ENCODE measurements at regions of chr14 and their contacts with region 1.

Region 1: DNA sequence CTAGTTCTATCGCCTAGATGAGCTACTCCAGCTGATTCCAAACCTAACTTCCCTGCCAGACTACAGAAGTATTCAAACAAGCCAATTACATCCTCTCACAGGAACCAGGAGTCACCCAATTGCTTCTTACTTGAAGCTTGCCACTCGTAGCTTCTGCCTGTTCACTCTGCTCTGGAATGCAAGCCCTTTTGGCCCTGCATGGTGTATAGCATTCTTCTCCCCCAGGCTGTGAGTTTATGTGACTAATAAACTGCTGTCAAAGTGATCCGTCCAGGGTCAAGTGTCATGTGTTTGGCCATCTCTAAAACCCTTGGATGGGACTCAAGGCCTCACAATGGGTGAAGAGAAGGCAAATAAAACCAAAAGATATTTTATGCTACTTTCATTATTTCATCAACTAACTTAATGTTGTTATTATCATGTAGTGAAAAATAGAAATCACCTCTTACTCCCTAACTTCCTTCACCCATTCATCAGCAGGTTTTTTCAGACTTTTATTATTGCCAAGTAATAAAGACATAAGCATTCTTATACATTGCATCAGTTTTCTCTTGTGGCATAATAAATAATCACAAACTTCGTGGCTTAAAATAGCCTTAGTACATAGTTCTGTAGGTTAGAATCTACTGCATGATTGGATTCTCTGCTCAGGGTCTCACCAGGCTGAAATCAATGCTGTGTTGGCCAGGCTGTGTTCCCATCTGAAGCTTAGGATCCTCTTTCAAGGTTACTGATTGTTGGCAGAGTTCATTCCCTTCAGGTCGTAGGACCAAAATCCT is 1981.7 kb upstream of the FLRT2 start:
- DNase-seq: no peak
- H3K4me3 ChIP-seq: no peak overlapping the region
- H3K27ac ChIP-seq: no peak overlapping the region
- H3K4me1 ChIP-seq: no peaks in the 10 kb centered on the region
- H3K27me3 ChIP-seq: no peaks in the 10 kb centered on the region
- CTCF ChIP-seq: no peak
- POLR2A ChIP-seq: no peak

Region 2: DNA sequence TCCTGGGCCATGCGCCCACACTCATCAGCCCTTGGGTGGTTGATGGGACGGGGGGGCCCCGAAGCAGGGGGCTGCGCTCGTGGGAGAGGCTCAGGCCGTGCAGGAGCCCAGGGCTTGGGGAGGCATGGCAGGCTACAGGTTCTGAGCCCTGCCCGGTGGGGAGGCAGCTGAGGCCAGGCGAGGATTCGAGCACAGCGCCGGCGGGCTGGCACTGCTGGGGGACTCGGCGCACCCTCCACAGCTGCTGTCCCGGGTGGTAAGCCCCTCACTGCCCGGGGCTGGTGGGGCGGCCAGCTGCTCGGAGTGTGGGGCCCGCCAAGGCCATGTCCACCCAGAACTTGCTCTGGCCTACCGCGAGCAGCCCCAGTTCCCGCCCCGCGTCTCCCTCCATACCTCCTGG is 1718.8 kb before region 1 on chr14:
- intact Hi-C with region 1: loop called (anchors 5 kb)
- DNase-seq: no peak
- H3K4me3 ChIP-seq: no peak overlapping the region
- H3K27ac ChIP-seq: no peak overlapping the region
- H3K4me1 ChIP-seq: no peaks in the 10 kb centered on the region
- H3K27me3 ChIP-seq: no peaks in the 10 kb centered on the region
- CTCF ChIP-seq: no peak
- POLR2A ChIP-seq: no peak

Region 3: GRCh38 chr14:83923842-83924241 is 375.6 kb after region 1 on chr14:
- intact Hi-C with region 1: loop called (anchors 5 kb)
- DNase-seq: peak in 1 of 2 donors; percentile 26
- H3K4me3 ChIP-seq: no peak overlapping the region
- H3K27ac ChIP-seq: no peak overlapping the region
- H3K4me1 ChIP-seq: no peaks in the 10 kb centered on the region
- H3K27me3 ChIP-seq: no peaks in the 10 kb centered on the region
- CTCF ChIP-seq: no peak
- POLR2A ChIP-seq: no peak

Measured in breast epithelium (tissue), 4 donors.